Activated T-helper 2 cell treated with anti-CD3 and anti-CD28 coated beads, Interferon-gamma antibody, Interleukin-2, Interleukin-4, amounts not matched to agents 10 μg/mL and 5 μg/mL and 100 μg/mL, durations not matched to agents 14 hours and 24 hours and 36 hours (primary cell): ENCODE measurements at regions of chr17 and their contacts with region 1.

Region 1: GRCh38 chr17:66633317-66633965 is 201.5 kb upstream of the CACNG5 start:
- DNase-seq: peak; percentile 41
- H3K4me3 Mint-ChIP-seq: peak overlapping the region; percentile 31
- H3K27ac Mint-ChIP-seq: peak overlapping the region; percentile 85
- H3K4me1 Mint-ChIP-seq: peaks cover 64% of the 10 kb centered on the region
- H3K27me3 Mint-ChIP-seq: no peaks in the 10 kb centered on the region

Region 2: DNA sequence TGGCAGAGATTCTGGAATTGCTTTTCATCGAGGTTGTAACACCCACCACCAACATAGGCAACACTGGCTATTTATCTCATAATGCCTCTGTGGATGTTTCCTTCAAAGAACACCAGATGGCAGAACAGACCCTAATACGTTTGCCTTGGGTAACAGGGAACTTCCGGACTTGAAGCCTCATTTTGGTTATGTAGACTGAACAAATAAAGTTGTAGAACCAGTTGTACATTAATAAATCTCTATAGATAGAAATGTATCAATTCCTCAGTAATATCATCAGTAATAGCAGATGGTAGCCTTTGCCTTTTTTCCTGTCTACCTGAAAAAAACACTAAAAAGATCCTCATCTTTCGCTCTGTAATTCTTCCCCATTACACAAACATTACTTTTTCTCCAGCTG is 378.3 kb before region 1 on chr17:
- intact Hi-C with region 1: loop called (anchors 5 kb)
- DNase-seq: peak; percentile 17
- H3K4me3 Mint-ChIP-seq: peak overlapping the region; percentile 42
- H3K27ac Mint-ChIP-seq: peak overlapping the region; percentile 43
- H3K4me1 Mint-ChIP-seq: peaks cover 23% of the 10 kb centered on the region
- H3K27me3 Mint-ChIP-seq: no peaks in the 10 kb centered on the region

Region 3: GRCh38 chr17:66399441-66399840 is 234.0 kb before region 1 on chr17:
- intact Hi-C with region 1: loop called (anchors 2 kb)
- DNase-seq: no peak
- H3K4me3 Mint-ChIP-seq: peak overlapping the region; percentile 47
- H3K27ac Mint-ChIP-seq: peak overlapping the region; percentile 86
- H3K4me1 Mint-ChIP-seq: peaks cover 80% of the 10 kb centered on the region
- H3K27me3 Mint-ChIP-seq: no peaks in the 10 kb centered on the region

Region 4: DNA sequence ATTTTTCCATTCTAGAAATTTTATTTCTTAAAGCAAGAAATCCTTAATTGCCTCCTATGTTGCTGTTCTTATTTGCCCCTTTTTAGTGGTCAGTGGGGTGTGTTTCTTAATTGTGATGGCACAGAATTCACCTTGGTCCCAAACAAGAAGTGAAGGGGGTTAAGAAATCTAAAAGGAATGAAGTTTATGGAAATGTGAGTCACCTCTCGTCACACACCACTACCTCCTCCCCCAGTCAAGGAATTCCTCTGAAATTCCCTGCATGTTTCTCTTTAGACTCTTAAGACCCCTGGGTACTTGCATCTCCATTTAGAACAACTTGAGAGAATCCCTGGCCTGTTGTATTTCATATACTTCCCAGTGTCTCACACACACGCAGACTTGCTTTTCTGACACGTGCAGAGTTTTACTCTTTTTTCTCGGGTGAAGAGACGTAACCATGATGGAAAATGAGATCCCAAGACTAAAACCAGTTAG is 83.7 kb before region 1 on chr17:
- intact Hi-C with region 1: loop called (anchors 2 kb)
- DNase-seq: no peak
- H3K4me3 Mint-ChIP-seq: no peak overlapping the region
- H3K27ac Mint-ChIP-seq: peak overlapping the region; percentile 14
- H3K4me1 Mint-ChIP-seq: peaks cover 46% of the 10 kb centered on the region
- H3K27me3 Mint-ChIP-seq: no peaks in the 10 kb centered on the region

Region 5: GRCh38 chr17:66652840-66653507 is 19.5 kb after region 1 on chr17:
- intact Hi-C with region 1: loop called (anchors 1 kb)
- DNase-seq: no peak
- H3K4me3 Mint-ChIP-seq: no peak overlapping the region
- H3K27ac Mint-ChIP-seq: peak overlapping the region; percentile 70
- H3K4me1 Mint-ChIP-seq: peaks cover 61% of the 10 kb centered on the region
- H3K27me3 Mint-ChIP-seq: no peaks in the 10 kb centered on the region

Region 6: GRCh38 chr17:66673668-66674315 is 40.4 kb after region 1 on chr17:
- intact Hi-C with region 1: no loop called
- DNase-seq: no peak
- H3K4me3 Mint-ChIP-seq: no peak overlapping the region
- H3K27ac Mint-ChIP-seq: peak overlapping the region; percentile 62
- H3K4me1 Mint-ChIP-seq: peaks cover 49% of the 10 kb centered on the region
- H3K27me3 Mint-ChIP-seq: no peaks in the 10 kb centered on the region